Sciatic nerve (tissue), 2 donors: ENCODE measurements at regions of chr1 and their contacts with region 1.

Region 1: GRCh38 chr1:204331847-204332487 is 27.8 kb downstream of the PLEKHA6 start:
- DNase-seq: no peak
- ATAC-seq: no peak

Region 2: GRCh38 chr1:203239526-203240305 is 1092.3 kb before region 1 on chr1:
- intact Hi-C with region 1: loop called (anchors 5 kb)
- DNase-seq: no peak
- ATAC-seq: no peak

Region 3: DNA sequence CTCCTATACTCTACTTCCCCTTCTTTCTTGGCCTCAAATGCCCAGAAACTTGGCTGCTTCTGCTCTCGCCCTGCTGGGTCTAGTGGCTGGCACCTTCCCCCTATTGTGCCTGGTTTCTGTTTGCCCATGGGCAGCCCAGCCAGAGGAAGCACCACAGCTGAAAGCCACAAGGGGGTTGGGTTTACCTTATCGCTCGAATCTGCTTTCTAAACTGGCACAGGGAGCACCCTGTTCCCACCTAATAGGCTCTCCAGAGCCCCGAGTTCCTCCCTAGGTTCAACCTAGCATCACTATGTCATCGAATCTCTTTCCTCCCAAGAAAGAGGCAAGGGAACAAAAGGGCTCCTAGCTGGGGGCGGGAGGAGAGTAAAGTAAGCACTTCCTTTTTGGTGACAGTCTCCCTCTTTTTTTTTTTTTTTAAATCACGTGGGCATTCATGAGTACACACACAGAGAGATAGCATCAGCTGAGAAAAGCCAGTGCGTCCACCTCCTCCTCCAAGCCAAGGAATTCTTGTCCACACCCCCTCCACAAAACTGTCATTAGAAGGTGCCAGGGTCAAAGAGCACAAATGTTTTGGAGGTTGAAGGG is 45.0 kb before region 1 on chr1:
- intact Hi-C with region 1: no loop called
- DNase-seq: no peak
- ATAC-seq: peak; percentile 72